CD4-positive, alpha-beta memory T cell (primary cell): ENCODE measurements at regions of chr10 and their contacts with region 1.

Region 1: GRCh38 chr10:14604181-14605142 is 170.2 kb downstream of the FAM107B start:
- DNase-seq: peak; percentile 67 to 79 (median 70)
- H3K4me3 ChIP-seq: peak overlapping the region; percentile 48 to 86
- H3K4me3 Mint-ChIP-seq: peak overlapping the region; percentile 89 to 100 (median 96)
- H3K27ac ChIP-seq: peak overlapping the region; percentile 76
- H3K27ac Mint-ChIP-seq: peak overlapping the region; percentile 92 to 100 (median 97)
- H3K4me1 ChIP-seq: peaks cover 43% of the 10 kb centered on the region
- H3K4me1 Mint-ChIP-seq: peaks cover 38 to 59% (median 49%) of the 10 kb centered on the region in 4 donors
- H3K27me3 ChIP-seq: no peaks in the 10 kb centered on the region
- H3K27me3 Mint-ChIP-seq: no peaks in the 10 kb centered on the region

Region 2: GRCh38 chr10:14507176-14507575 is 97.3 kb before region 1 on chr10:
- CTCF ChIA-PET with region 1: no interaction called
- POLR2A ChIA-PET with region 1: interaction called, 3 read pairs
- intact Hi-C with region 1: loop called (anchors 5 kb)
- DNase-seq: peak; percentile 80 to 89 (median 85)
- H3K4me3 ChIP-seq: no peak overlapping the region
- H3K4me3 Mint-ChIP-seq: peak overlapping the region; percentile 26 to 75 (median 67)
- H3K27ac ChIP-seq: peak overlapping the region; percentile 56
- H3K27ac Mint-ChIP-seq: peak overlapping the region; percentile 89 to 99 (median 96)
- H3K4me1 ChIP-seq: peaks cover 39% of the 10 kb centered on the region
- H3K4me1 Mint-ChIP-seq: peaks cover 37 to 40% (median 38%) of the 10 kb centered on the region in 4 donors
- H3K27me3 ChIP-seq: no peaks in the 10 kb centered on the region
- H3K27me3 Mint-ChIP-seq: no peaks in the 10 kb centered on the region

Region 3: DNA sequence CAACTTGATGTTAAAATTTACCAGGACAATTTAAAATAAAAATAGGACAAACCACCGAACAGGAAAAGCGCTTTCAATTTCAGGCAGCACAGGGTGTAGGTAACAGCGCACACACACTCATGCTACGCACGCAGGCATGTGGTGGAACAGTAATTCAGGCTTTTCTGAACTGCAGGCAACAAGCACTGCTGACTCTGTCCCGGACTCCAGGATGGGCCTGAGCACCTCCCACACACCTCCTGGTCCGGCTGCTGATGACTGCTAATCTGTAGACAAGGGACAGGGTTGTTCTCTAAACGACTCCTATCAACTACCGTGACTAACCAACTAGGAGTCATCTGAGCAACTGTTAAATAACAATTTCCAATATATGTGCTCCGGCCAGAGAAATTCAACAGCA is 81.2 kb before region 1 on chr10:
- CTCF ChIA-PET with region 1: no interaction called
- POLR2A ChIA-PET with region 1: no interaction called
- intact Hi-C with region 1: no loop called
- DNase-seq: no peak
- H3K4me3 ChIP-seq: no peak overlapping the region
- H3K4me3 Mint-ChIP-seq: peak overlapping the region in 6 of 8 donors; percentile 0 to 59 (median 46)
- H3K27ac ChIP-seq: peak overlapping the region; percentile 19
- H3K27ac Mint-ChIP-seq: peak overlapping the region; percentile 39 to 91 (median 82)
- H3K4me1 ChIP-seq: peaks cover 51% of the 10 kb centered on the region
- H3K4me1 Mint-ChIP-seq: peaks cover 25 to 68% (median 43%) of the 10 kb centered on the region in 4 donors
- H3K27me3 ChIP-seq: no peaks in the 10 kb centered on the region
- H3K27me3 Mint-ChIP-seq: no peaks in the 10 kb centered on the region

Region 4: DNA sequence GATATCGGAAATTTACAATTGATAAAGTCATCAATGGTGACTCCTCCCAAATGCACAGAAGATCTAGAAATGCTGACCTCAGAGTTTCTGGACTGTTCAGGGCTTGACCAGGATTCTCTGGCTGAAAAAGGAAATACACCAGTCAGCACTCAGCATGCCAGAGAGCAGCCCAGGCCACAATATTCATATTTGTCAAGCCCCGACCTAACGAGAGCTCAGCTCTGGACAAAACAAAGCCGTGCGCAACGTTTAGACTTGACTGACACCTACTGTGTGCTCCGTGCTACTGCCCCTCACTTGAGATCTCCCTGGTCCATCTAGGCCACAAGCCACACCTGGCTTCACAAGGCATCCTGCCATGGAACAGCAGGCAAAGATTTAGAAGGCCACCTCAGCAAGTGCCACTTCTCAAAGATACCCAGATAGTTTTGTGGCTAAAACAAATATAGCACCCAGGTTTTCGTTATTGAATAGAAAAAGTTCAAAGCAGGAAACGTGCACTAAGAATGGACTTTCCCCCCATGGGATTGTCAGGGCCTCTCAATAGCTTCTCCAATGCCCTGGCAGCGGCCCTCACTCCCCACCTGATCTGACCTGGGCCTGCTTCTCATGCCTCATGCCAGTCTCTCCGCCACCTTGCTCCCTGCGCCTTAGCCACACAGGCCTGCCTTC is 48.0 kb before region 1 on chr10:
- CTCF ChIA-PET with region 1: interaction called, 5 read pairs
- POLR2A ChIA-PET with region 1: interaction called, 640 read pairs
- intact Hi-C with region 1: loop called (anchors 2 kb)
- DNase-seq: peak in 4 of 5 donors; percentile 34 to 64 (median 47)
- H3K4me3 ChIP-seq: no peak overlapping the region
- H3K4me3 Mint-ChIP-seq: peak overlapping the region; percentile 53 to 87 (median 75)
- H3K27ac ChIP-seq: peak overlapping the region; percentile 65
- H3K27ac Mint-ChIP-seq: peak overlapping the region; percentile 93 to 97 (median 94)
- H3K4me1 ChIP-seq: peaks cover 100% of the 10 kb centered on the region
- H3K4me1 Mint-ChIP-seq: peaks cover 80 to 99% (median 89%) of the 10 kb centered on the region in 4 donors
- H3K27me3 ChIP-seq: no peaks in the 10 kb centered on the region
- H3K27me3 Mint-ChIP-seq: no peaks in the 10 kb centered on the region

Region 5: DNA sequence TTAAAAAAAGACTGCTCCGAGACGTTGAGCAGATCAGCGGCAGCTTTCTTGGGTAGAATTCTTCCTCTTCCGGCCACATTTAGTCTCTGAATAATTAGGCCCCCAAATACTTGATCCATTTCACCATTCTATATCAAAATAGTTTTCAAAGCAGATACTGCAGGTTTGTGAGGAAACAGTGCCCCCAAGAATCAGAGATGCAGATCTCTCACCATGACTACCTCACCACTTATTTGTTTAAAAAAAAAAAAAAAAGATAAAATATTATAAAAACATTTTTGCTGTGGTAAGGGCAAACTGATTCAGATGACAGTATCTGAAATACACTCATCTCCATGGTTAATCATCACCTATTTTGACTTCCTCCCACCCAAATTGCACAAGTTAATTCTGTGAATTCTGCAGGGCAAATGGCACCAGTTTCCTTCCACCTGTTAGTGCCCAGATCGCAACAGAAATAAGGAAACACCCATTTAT is 40.2 kb before region 1 on chr10:
- CTCF ChIA-PET with region 1: interaction called, 3 read pairs
- POLR2A ChIA-PET with region 1: interaction called, 640 read pairs
- intact Hi-C with region 1: loop called (anchors 2 kb)
- DNase-seq: peak; percentile 69 to 82 (median 78)
- H3K4me3 ChIP-seq: peak overlapping the region in 1 of 2 donors; percentile 8
- H3K4me3 Mint-ChIP-seq: peak overlapping the region; percentile 71 to 91 (median 85)
- H3K27ac ChIP-seq: peak overlapping the region; percentile 79
- H3K27ac Mint-ChIP-seq: peak overlapping the region; percentile 90 to 97 (median 96)
- H3K4me1 ChIP-seq: peaks cover 96% of the 10 kb centered on the region
- H3K4me1 Mint-ChIP-seq: peaks cover 71 to 99% (median 85%) of the 10 kb centered on the region in 4 donors
- H3K27me3 ChIP-seq: no peaks in the 10 kb centered on the region
- H3K27me3 Mint-ChIP-seq: no peaks in the 10 kb centered on the region

Region 6: GRCh38 chr10:14571866-14572507 is 32.5 kb before region 1 on chr10:
- CTCF ChIA-PET with region 1: interaction called, 3 read pairs
- POLR2A ChIA-PET with region 1: interaction called, 640 read pairs
- intact Hi-C with region 1: loop called (anchors 1 kb)
- DNase-seq: peak; percentile 86 to 91 (median 89)
- H3K4me3 ChIP-seq: peak overlapping the region; percentile 70 to 75
- H3K4me3 Mint-ChIP-seq: peak overlapping the region; percentile 90 to 98 (median 94)
- H3K27ac ChIP-seq: peak overlapping the region; percentile 82
- H3K27ac Mint-ChIP-seq: peak overlapping the region; percentile 94 to 100 (median 97)
- H3K4me1 ChIP-seq: peaks cover 93% of the 10 kb centered on the region
- H3K4me1 Mint-ChIP-seq: peaks cover 58 to 97% (median 79%) of the 10 kb centered on the region in 4 donors
- H3K27me3 ChIP-seq: no peaks in the 10 kb centered on the region
- H3K27me3 Mint-ChIP-seq: no peaks in the 10 kb centered on the region

Region 7: DNA sequence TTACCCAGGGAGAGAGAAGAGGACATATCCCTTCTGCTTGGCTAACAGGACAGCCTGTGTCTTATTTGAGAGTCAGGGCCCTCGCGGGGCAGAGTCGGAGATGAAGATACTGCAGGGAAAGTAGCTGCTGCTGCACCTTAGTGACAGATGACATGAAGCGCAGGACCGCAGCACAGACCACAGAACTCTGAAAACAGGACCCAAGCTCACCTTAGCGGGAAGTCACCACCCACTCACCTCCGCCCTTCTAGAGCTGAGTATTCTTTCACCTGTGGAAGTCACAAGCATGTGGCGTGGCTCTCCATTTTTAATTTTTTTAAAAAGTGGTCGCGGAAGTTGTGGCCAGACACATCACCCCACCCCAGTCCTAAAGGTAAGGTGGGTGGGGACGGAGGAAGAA is 21.2 kb before region 1 on chr10:
- CTCF ChIA-PET with region 1: interaction called, 14 read pairs
- POLR2A ChIA-PET with region 1: interaction called, 37 read pairs
- intact Hi-C with region 1: loop called (anchors 1 kb)
- DNase-seq: peak; percentile 84 to 94 (median 89)
- H3K4me3 ChIP-seq: peak overlapping the region in 1 of 2 donors; percentile 15
- H3K4me3 Mint-ChIP-seq: peak overlapping the region; percentile 75 to 90 (median 82)
- H3K27ac ChIP-seq: peak overlapping the region; percentile 86
- H3K27ac Mint-ChIP-seq: peak overlapping the region; percentile 96 to 100 (median 98)
- H3K4me1 ChIP-seq: peaks cover 99% of the 10 kb centered on the region
- H3K4me1 Mint-ChIP-seq: peaks cover 76 to 99% (median 88%) of the 10 kb centered on the region in 4 donors
- H3K27me3 ChIP-seq: no peaks in the 10 kb centered on the region
- H3K27me3 Mint-ChIP-seq: no peaks in the 10 kb centered on the region

Region 8: DNA sequence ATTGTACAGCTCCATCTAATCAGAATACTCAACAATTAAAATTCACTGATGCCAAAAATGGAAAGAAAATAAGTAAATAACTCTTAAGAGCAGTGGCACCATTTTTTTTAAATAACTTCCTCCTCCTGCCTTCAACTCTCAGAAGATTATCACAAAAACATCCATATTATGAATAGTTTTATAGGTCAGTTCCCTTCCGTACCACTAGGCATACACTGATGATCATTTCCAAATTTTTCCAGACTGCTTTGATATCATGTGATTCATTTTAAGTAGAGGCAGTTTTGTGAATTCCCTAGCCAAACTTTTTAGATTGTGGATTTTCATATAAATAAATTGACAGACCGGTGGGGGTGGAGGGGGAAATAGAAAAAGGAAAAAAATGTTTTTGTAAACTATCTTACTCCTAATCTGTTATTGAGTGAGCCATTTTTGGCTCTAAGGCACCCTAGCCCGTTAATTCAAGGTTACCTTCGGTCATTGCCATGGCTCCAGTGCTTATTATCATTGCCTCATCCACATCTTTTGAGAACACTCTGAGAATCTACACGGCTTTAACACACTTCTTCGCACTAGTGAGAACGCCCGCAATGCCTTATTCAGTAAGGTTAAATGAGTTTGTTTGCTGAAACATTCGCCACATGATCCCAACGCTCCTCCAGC is 169.2 kb after region 1 on chr10:
- CTCF ChIA-PET with region 1: no interaction called
- POLR2A ChIA-PET with region 1: no interaction called
- intact Hi-C with region 1: no loop called
- DNase-seq: no peak
- H3K4me3 ChIP-seq: no peak overlapping the region
- H3K4me3 Mint-ChIP-seq: no peak overlapping the region
- H3K27ac ChIP-seq: no peak overlapping the region
- H3K27ac Mint-ChIP-seq: no peak overlapping the region
- H3K4me1 ChIP-seq: no peaks in the 10 kb centered on the region
- H3K4me1 Mint-ChIP-seq: peaks cover 0 to 6% (median 1%) of the 10 kb centered on the region in 4 donors
- H3K27me3 ChIP-seq: no peaks in the 10 kb centered on the region
- H3K27me3 Mint-ChIP-seq: no peaks in the 10 kb centered on the region

Region 9: DNA sequence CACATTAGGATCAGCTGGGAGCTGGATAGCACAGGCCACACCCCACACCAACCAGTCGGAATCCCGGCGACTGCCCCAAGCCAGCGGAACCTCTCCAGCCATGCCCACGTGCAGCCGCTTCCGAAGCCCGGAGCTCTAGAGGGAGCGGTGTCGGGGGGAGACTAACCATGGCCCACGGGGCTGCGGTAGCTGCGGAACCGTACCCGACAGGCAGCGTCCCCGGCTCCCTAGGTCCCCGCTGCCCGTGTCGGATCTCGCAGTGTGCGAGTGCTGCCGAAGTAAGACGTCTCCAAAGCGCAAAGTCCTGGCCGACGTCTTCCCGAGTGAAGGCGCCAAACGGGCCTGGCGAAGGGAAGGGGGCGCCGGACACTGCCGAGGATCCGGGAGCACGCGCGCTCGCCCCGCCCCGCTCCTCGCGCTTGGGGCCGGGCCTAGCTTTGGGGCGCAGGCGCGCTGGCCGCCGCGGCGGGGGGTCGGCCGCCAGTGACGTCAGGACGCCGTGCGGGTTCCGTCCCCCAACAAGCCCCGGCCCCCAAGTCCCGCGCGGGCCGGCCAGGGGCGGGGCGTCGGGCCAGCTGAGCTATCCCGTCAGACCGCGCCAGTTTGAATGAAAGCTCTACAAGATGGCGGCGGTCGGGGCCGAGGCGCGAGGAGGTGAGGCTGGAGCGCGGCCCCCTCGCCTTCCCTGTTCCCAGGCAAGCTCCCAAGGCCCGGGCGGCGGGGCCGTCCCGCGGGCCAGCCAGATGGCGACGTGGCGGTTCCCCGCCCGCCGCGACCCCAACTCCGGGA is 274.0 kb after region 1 on chr10 and contains the start of gene SUV39H2:
- CTCF ChIA-PET with region 1: no interaction called
- POLR2A ChIA-PET with region 1: no interaction called
- intact Hi-C with region 1: loop called (anchors 5 kb)
- DNase-seq: peak; percentile 87 to 91 (median 90)
- H3K4me3 ChIP-seq: peak within 1 kb of the TSS; percentile 44 to 88
- H3K4me3 Mint-ChIP-seq: peak within 1 kb of the TSS; percentile 93 to 96 (median 94)
- H3K27ac ChIP-seq: peak within 1 kb of the TSS; percentile 84
- H3K27ac Mint-ChIP-seq: peak within 1 kb of the TSS; percentile 87 to 95 (median 94)
- H3K4me1 ChIP-seq: peaks cover 17% of the 10 kb centered on the region
- H3K4me1 Mint-ChIP-seq: peaks cover 13 to 48% (median 22%) of the 10 kb centered on the region in 4 donors
- H3K27me3 ChIP-seq: no peaks in the 10 kb centered on the region
- H3K27me3 Mint-ChIP-seq: no peaks in the 10 kb centered on the region
- total RNA-seq, gene SUV39H2: 5.0 to 5.7 TPM